AG04449 (cell line): ENCODE measurements at regions of chr11 and their contacts with region 1.

Region 1: DNA sequence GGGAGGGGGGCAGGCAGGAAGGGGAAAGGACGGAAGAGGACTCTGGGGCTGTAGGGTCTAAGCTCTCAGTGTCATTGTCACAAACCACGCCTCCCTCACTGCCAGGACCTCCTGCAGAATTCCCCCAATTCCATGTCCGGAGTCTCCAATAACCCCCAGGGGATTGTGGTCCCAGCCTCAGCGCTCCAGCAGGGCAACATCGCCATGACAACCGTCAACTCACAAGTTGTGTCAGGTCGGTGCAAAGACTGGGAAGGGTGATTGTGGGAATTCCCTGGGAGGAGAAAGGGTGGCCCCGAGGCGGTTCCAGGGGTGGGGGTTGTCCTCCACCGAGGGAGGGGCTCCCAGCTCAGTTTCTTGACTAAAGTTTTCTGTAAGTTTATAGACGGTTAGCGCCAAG is 86.0 kb downstream of the FEZ1 start:
- DNase-seq: no peak
- H3K4me3 ChIP-seq: no peak overlapping the region
- CTCF ChIP-seq: no peak

Region 2: GRCh38 chr11:125423247-125423849 is 13.3 kb after region 1 on chr11:
- CTCF ChIA-PET with region 1: interaction called, 92 read pairs
- POLR2A ChIA-PET with region 1: no interaction called
- DNase-seq: no peak
- H3K4me3 ChIP-seq: no peak overlapping the region
- CTCF ChIP-seq: peak; percentile 25